ENCODE measurements at regions of chr3 and their contacts with region 1.

Region 1: DNA sequence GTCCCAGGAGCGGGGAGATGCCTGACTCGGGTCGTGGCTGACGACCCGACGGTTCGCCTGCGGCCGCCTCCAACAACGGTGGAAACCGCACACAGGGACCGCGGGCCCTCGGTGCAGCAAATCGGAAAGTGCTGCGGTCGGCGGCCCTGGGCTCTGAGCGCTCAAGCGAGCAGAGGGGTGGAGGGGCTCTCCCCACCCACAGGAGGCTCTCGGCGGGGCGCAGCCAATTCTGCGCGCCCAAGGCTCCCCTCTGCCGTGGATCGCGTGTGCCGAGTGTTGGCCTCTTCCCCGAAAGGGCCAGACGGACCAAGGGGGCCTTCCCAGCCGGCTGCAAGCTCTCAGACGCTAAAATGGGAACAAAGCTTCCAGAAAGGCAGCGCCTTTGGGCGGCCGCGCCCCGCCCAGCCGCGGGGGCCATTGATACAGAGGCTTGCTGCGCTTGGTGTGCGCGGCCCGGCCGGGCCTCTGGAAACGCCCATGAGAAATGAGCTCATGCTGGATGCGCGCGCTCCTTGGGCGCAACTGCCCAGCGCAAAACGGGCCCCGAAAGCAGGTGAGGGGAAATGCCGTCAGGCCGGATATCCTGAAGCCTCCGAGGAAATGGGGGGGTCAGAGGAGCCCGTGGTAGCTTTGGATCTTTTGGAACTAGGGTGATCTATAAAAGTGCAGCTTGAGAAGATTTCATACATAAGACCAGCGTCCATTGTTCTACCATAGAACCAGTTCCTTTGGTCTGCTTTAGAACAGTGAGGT is 1.2 kb upstream of the GSK3B start:
- DNase-seq: peak; percentile 92
- H3K4me3 Mint-ChIP-seq: no peak overlapping the region
- H3K27ac Mint-ChIP-seq: no peak overlapping the region
- H3K4me1 Mint-ChIP-seq: peaks cover 18% of the 10 kb centered on the region
- H3K27me3 Mint-ChIP-seq: no peaks in the 10 kb centered on the region

Region 2: GRCh38 chr3:119293871-119294695 is 801.3 kb before region 1 on chr3 and contains the start of gene ARHGAP31:
- CTCF ChIA-PET with region 1: no interaction called
- intact Hi-C with region 1: loop called (anchors 10 kb)
- DNase-seq: peak; percentile 94
- H3K4me3 Mint-ChIP-seq: peak within 1 kb of the TSS; percentile 82
- H3K27ac Mint-ChIP-seq: peak within 1 kb of the TSS; percentile 92
- H3K4me1 Mint-ChIP-seq: peaks cover 36% of the 10 kb centered on the region
- H3K27me3 Mint-ChIP-seq: no peaks in the 10 kb centered on the region
- total RNA-seq, gene ARHGAP31: 3.5 to 3.7 TPM

Region 3: DNA sequence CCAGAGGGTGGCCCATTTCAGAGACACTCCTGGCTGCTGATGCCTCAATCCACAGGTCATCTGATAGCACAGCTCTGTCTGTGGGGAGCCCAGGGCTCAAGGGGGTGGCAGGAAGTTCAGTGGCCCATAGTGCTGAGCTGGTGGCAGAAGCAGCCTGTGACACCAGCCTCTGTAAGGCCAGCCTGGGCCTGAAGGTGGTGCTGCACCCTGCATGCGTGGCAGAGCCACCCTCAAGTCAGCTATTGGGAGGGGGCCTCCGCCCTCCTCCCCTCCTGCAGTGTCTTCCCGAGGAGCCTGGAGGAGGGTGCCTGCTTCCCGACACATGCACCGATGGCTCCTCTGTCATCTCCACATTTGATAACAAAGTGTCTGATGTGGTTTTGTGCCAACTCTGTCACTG is 494.7 kb before region 1 on chr3:
- CTCF ChIA-PET with region 1: no interaction called
- intact Hi-C with region 1: loop called (anchors 10 kb)
- DNase-seq: peak; percentile 59
- H3K4me3 Mint-ChIP-seq: no peak overlapping the region
- H3K27ac Mint-ChIP-seq: no peak overlapping the region
- H3K4me1 Mint-ChIP-seq: peaks cover 3% of the 10 kb centered on the region
- H3K27me3 Mint-ChIP-seq: no peaks in the 10 kb centered on the region

Region 4: DNA sequence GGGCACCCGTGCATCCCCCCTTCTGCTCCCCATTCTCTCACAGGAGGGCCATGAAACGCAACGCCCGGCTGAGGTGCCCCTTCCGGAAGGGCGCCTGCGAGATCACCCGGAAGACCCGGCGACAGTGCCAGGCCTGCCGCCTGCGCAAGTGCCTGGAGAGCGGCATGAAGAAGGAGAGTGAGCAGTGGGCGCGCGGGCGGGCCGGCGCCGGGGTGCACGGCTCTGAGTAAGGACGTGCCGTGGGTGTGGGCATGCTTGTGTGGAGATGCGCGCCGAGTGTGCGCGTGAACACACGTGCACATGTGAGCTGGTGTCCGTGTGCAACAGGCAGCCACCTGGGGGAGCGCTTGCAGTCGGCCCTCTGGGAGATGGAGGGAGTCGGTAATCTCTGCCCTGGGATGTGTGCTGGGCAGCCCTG is 285.4 kb before region 1 on chr3:
- CTCF ChIA-PET with region 1: interaction called, 3 read pairs
- intact Hi-C with region 1: loop called (anchors 5 kb)
- DNase-seq: peak; percentile 67
- H3K4me3 Mint-ChIP-seq: peak overlapping the region; percentile 78
- H3K27ac Mint-ChIP-seq: peak overlapping the region; percentile 70
- H3K4me1 Mint-ChIP-seq: peaks cover 10% of the 10 kb centered on the region
- H3K27me3 Mint-ChIP-seq: no peaks in the 10 kb centered on the region

Region 5: DNA sequence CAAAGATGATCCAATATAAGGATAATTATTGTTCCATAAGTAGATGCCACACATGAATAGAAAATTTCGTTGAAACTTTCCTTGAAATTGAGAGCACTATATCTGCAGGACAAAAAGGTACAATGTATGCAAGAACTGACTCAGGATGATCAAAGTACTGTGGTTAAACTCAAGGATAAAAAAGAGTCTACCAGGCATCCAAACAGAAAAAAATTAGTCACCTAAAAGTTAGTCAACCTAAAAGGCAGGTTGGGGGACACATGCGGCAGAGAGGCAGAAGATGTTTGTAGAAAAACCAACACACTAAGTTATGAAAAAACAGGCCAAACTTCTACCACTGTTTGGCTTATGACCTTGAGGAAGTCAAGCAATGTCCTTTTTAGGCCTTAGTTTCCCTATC is 69.9 kb before region 1 on chr3:
- CTCF ChIA-PET with region 1: no interaction called
- intact Hi-C with region 1: loop called (anchors 1 kb)
- DNase-seq: peak; percentile 27
- H3K4me3 Mint-ChIP-seq: no peak overlapping the region
- H3K27ac Mint-ChIP-seq: peak overlapping the region; percentile 48
- H3K4me1 Mint-ChIP-seq: peaks cover 69% of the 10 kb centered on the region
- H3K27me3 Mint-ChIP-seq: no peaks in the 10 kb centered on the region

Region 6: GRCh38 chr3:120450600-120451271 is 355.3 kb after region 1 on chr3 and contains the start of gene FSTL1:
- CTCF ChIA-PET with region 1: no interaction called
- intact Hi-C with region 1: no loop called
- DNase-seq: peak; percentile 7
- H3K4me3 Mint-ChIP-seq: peak within 1 kb of the TSS; percentile 75
- H3K27ac Mint-ChIP-seq: no peak within 1 kb of the TSS
- H3K4me1 Mint-ChIP-seq: peaks cover 4% of the 10 kb centered on the region
- H3K27me3 Mint-ChIP-seq: peaks cover 49% of the 10 kb centered on the region
- total RNA-seq, gene FSTL1: 0.40 TPM in 1 of 2 experiments, not detected in the other

Region 7: GRCh38 chr3:120596116-120596852 is 500.9 kb after region 1 on chr3 and contains the start of gene NDUFB4:
- CTCF ChIA-PET with region 1: no interaction called
- intact Hi-C with region 1: loop called (anchors 1 kb)
- DNase-seq: peak; percentile 97
- H3K4me3 Mint-ChIP-seq: peak within 1 kb of the TSS; percentile 86
- H3K27ac Mint-ChIP-seq: peak within 1 kb of the TSS; percentile 95
- H3K4me1 Mint-ChIP-seq: peaks cover 7% of the 10 kb centered on the region
- H3K27me3 Mint-ChIP-seq: no peaks in the 10 kb centered on the region
- total RNA-seq, gene NDUFB4: 146 to 152 TPM

Region 8: DNA sequence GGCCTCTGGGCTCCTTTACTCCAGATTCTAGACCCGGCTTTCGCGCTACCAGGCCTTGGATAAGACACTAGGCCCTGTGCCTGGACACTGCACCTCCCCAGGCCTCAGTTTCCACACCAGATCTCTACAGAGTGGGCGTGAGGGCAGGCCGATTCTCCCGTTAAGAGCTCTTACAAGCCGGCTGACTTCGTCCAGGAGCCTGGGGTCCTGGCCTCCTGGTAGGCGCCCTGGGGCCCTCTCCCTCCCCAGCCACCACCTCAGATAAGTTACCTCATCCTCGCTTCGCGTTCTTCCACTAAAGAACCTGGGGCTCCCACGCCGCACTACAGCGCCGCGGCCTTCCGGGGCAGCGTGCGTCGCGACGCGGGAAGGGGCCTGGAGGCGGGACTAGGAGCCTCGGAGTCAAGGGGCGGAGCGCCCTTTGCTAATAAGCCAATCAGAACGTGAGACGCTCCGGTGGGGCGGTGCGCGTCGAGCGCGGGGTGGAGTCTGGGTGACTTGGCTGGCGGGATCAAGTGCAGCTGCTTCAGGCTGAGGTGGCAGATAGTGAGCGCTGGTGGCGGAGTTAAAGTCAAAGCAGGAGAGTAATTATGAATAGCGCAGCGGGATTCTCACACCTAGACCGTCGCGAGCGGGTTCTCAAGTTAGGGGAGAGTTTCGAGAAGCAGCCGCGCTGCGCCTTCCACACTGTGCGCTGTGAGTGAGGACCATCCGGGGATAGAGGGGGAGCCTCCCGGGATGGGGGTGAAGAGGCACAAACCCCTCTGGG is 1739.5 kb after region 1 on chr3 and contains the starts of genes EAF2 and IQCB1:
- CTCF ChIA-PET with region 1: no interaction called
- intact Hi-C with region 1: loop called (anchors 2 kb)
- DNase-seq: peak; percentile 97
- H3K4me3 Mint-ChIP-seq: peak within 1 kb of the TSS; percentile 95
- H3K27ac Mint-ChIP-seq: peak within 1 kb of the TSS; percentile 88
- H3K4me1 Mint-ChIP-seq: peaks cover 36% of the 10 kb centered on the region
- H3K27me3 Mint-ChIP-seq: no peaks in the 10 kb centered on the region
- total RNA-seq, gene EAF2: 8.2 to 9.3 TPM
- total RNA-seq, gene IQCB1: 36.5 to 37.8 TPM